Keratinocyte (primary cell): ENCODE measurements at regions of chr16 and their contacts with region 1.

Region 1: GRCh38 chr16:58306327-58306726 is 11.5 kb upstream of the PRSS54 start:
- DNase-seq: peak; percentile 4
- H3K4me3 ChIP-seq: no peak overlapping the region
- H3K27ac ChIP-seq: no peak overlapping the region
- H3K4me1 ChIP-seq: no peaks in the 10 kb centered on the region
- H3K27me3 ChIP-seq: no peaks in the 10 kb centered on the region
- CTCF ChIP-seq: peak; percentile 51 to 72 (median 51)

Region 2: DNA sequence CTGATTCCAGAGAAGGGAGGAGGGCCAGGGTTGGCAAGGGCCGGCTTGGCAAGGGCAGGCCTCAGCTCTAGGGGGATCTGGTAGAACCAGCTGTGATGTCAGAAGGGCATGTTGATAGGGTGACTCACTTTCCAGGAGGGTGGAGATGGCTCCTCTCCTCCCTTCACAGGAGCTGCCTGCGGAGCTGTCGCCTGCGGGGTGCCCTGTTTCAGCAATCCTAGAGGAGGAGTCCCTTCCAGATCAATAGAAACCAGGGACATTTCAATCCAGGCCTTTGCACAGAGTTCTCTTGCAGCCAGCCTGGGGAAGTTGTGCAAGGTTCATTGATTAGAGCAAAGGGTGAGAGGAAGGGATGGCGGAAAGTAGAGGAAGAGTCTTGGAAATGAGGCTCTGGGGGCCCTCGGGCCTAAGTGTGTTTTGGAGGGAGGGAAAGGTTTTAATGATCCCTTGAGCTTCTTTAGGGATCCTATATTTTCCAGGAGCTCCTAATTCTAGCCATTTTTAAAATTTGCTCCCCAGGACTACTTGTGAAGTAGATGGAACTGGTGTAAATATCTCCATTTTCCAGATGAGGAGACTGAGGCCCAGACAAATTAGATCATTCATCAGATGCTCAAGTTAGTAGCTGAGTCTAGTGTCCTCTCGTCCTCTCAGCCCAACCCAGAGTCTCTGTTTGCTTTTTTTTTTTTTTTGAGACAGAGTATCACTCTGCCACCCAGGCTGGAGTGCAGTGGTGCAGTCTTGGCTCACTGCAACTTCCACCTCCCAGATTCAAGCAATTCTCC is 83.6 kb before region 1 on chr16:
- dilution Hi-C with region 1: loop called (anchors 25 kb)
- DNase-seq: peak; percentile 23
- H3K4me3 ChIP-seq: no peak overlapping the region
- H3K27ac ChIP-seq: no peak overlapping the region
- H3K4me1 ChIP-seq: peaks cover 11% of the 10 kb centered on the region
- H3K27me3 ChIP-seq: peaks cover 6% of the 10 kb centered on the region
- CTCF ChIP-seq: no peak